HCT116 (cell line): ENCODE measurements at regions of chr20 and their contacts with region 1.

Region 1: GRCh38 chr20:49541733-49542513 is 26.0 kb downstream of the PTGIS start:
- DNase-seq: peak; percentile 67
- ATAC-seq: peak; percentile 77
- H3K4me3 ChIP-seq: no peak overlapping the region
- H3K27ac ChIP-seq: no peak overlapping the region
- H3K4me1 ChIP-seq: no peaks in the 10 kb centered on the region
- H3K27me3 ChIP-seq: no peaks in the 10 kb centered on the region
- CTCF ChIP-seq: peak; percentile 72 to 98 (median 86)
- POLR2A ChIP-seq: no peak
- RAD21 ChIP-seq: peak; percentile 93

Region 2: GRCh38 chr20:49460916-49461315 is 81.0 kb before region 1 on chr20:
- CTCF ChIA-PET with region 1: no interaction called
- POLR2A ChIA-PET with region 1: no interaction called
- RAD21 ChIA-PET with region 1: no interaction called
- intact Hi-C with region 1: no loop called
- DNase-seq: no peak
- ATAC-seq: no peak
- H3K4me3 ChIP-seq: no peak overlapping the region
- H3K27ac ChIP-seq: no peak overlapping the region
- H3K4me1 ChIP-seq: no peaks in the 10 kb centered on the region
- H3K27me3 ChIP-seq: 0 out of 2 replicates have a peak, but pooled peaks cover 5% of the 10 kb centered on the region
- CTCF ChIP-seq: no peak
- POLR2A ChIP-seq: no peak
- RAD21 ChIP-seq: no peak

Region 3: GRCh38 chr20:49556621-49557020 is 14.7 kb after region 1 on chr20:
- CTCF ChIA-PET with region 1: interaction called, 21 read pairs
- POLR2A ChIA-PET with region 1: no interaction called
- RAD21 ChIA-PET with region 1: no interaction called
- intact Hi-C with region 1: no loop called
- DNase-seq: no peak
- ATAC-seq: no peak
- H3K4me3 ChIP-seq: no peak overlapping the region
- H3K27ac ChIP-seq: no peak overlapping the region
- H3K4me1 ChIP-seq: peaks cover 4 to 7% of the 10 kb centered on the region in 2 experiments
- H3K27me3 ChIP-seq: no peaks in the 10 kb centered on the region
- CTCF ChIP-seq: no peak
- POLR2A ChIP-seq: no peak
- RAD21 ChIP-seq: no peak

Region 4: DNA sequence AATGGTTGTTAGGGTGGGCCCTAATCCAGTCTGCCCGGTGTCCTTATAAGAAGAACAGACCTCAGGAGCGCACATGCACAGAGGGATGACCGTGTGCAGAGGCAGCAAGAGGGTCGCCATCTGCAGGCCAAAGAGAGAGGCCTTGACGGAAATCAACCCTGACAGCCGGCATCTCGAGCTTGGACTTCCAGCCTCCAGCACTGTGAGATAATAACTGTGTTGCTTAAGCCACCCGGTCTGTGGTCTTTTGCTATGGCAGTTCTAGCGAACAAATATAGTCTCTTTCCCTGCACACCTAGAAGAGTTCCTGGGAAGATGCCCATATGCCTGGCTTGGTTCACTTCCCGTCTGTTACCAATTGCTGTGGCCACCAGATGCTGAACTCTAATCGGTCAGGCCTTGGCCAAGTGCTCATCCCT is 61.3 kb after region 1 on chr20:
- CTCF ChIA-PET with region 1: interaction called, 66 read pairs
- POLR2A ChIA-PET with region 1: interaction called, 3 read pairs
- RAD21 ChIA-PET with region 1: interaction called, 10 read pairs
- intact Hi-C with region 1: no loop called
- DNase-seq: no peak
- ATAC-seq: peak; percentile 86
- H3K4me3 ChIP-seq: no peak overlapping the region
- H3K27ac ChIP-seq: no peak overlapping the region
- H3K4me1 ChIP-seq: peaks cover 6 to 9% of the 10 kb centered on the region in 2 experiments; a peak in 3 of 4 replicates
- H3K27me3 ChIP-seq: no peaks in the 10 kb centered on the region
- CTCF ChIP-seq: peak; percentile 57 to 64 (median 57); a peak in 5 of 6 replicates
- POLR2A ChIP-seq: no peak
- RAD21 ChIP-seq: peak; percentile 53

Region 5: DNA sequence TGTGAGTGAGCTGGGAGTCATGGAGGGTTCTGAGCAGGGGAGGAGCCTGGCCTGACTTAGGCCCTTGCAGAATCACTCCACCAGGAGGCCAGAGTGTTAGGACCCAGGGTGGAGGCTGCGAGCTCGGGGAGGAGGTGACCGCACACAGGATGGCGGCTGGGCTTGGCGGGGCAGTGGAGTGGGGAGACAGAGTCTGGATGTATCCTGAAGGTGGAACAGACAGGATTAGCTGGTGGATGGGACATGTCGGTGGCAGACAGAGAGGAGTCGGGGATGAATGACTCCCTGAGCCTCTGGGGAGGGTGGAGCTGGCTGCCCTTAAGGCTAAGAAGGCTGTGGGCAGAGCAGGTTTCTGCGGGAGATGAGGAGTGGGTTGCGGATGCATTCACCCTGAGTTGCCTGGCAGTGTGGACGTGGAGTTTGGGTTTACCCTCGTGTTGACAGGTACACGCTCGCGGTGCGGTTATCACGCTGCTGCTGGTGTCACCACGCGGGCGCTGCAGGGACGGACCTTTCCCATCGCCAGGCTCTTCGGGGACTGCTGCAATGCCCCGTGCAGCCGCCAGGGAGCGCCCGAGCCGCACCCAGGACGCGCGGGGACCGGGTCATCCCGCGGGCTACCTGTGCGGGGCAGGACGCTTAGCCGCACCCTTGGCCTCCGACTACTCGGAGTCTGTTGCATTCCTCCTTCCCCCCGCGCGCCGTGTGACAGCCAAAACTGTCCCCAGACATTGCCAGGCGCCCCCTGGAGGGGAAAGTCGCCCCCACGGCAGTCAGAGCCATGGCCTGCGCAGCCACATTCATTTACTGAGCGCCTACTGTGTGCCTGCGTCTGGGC is 69.0 kb after region 1 on chr20:
- CTCF ChIA-PET with region 1: interaction called, 66 read pairs
- POLR2A ChIA-PET with region 1: interaction called, 3 read pairs
- RAD21 ChIA-PET with region 1: interaction called, 7 to 10 read pairs
- intact Hi-C with region 1: loop called (anchors 1 kb)
- DNase-seq: peak; percentile 72
- ATAC-seq: peak; percentile 85
- H3K4me3 ChIP-seq: peak overlapping the region; percentile 22 to 27; a peak in 3 of 4 replicates
- H3K27ac ChIP-seq: no peak overlapping the region; the same call in 1 of the 2 replicates
- H3K4me1 ChIP-seq: peaks cover 6 to 26% of the 10 kb centered on the region in 2 experiments; a peak in 3 of 4 replicates
- H3K27me3 ChIP-seq: no peaks in the 10 kb centered on the region
- CTCF ChIP-seq: peak; percentile 92 to 99 (median 98)
- POLR2A ChIP-seq: no peak
- RAD21 ChIP-seq: peak; percentile 100

Region 6: GRCh38 chr20:49724408-49725223 is 182.7 kb after region 1 on chr20:
- CTCF ChIA-PET with region 1: no interaction called
- POLR2A ChIA-PET with region 1: no interaction called
- RAD21 ChIA-PET with region 1: no interaction called
- intact Hi-C with region 1: no loop called
- DNase-seq: no peak
- ATAC-seq: no peak
- H3K4me3 ChIP-seq: no peak overlapping the region
- H3K27ac ChIP-seq: no peak overlapping the region
- H3K4me1 ChIP-seq: no peaks in the 10 kb centered on the region
- H3K27me3 ChIP-seq: no peaks in the 10 kb centered on the region
- CTCF ChIP-seq: no peak
- POLR2A ChIP-seq: no peak
- RAD21 ChIP-seq: no peak

Region 7: GRCh38 chr20:49846206-49846807 is 304.4 kb after region 1 on chr20:
- CTCF ChIA-PET with region 1: interaction called, 11 read pairs
- POLR2A ChIA-PET with region 1: no interaction called
- RAD21 ChIA-PET with region 1: interaction called in 1 of 2 experiments, 4 read pairs
- intact Hi-C with region 1: no loop called
- DNase-seq: peak; percentile 16
- ATAC-seq: peak; percentile 90
- H3K4me3 ChIP-seq: no peak overlapping the region
- H3K27ac ChIP-seq: no peak overlapping the region
- H3K4me1 ChIP-seq: no peaks in the 10 kb centered on the region
- H3K27me3 ChIP-seq: no peaks in the 10 kb centered on the region
- CTCF ChIP-seq: peak; percentile 51 to 82 (median 65)
- POLR2A ChIP-seq: no peak
- RAD21 ChIP-seq: peak; percentile 82

Region 8: DNA sequence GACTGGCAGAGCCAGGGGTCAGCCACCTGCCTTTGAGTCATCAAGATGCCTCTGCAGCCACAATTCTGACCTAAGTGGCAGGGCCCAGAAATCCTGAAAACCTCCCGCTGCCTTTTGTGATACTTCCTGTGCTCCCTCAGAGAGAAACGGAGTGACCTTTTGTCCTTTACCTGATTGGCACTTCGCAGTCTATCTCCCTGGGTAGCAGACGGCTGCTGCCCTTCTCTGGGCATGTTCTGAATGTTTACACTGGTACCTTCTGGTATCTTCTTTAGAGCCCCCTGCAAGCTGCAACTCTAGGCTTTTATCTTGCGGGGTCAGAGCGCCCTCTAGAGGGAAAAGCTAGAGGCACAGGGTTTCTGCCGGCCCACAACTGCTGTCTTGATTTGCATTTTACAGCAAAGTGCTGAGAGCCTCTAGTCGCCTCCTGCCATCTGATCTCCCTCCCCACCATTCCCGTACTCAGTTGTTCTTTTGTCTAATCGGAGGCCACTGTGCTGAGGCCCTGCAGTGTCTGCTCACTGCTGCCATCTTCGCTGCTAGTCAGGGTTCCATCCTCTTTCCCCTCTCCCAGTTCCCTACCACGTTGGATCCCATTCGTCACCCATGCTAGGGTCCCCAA is 346.5 kb after region 1 on chr20:
- CTCF ChIA-PET with region 1: interaction called, 5 read pairs
- POLR2A ChIA-PET with region 1: no interaction called
- RAD21 ChIA-PET with region 1: no interaction called
- intact Hi-C with region 1: loop called (anchors 5 kb)
- DNase-seq: peak; percentile 21
- ATAC-seq: peak; percentile 84
- H3K4me3 ChIP-seq: no peak overlapping the region
- H3K27ac ChIP-seq: no peak overlapping the region
- H3K4me1 ChIP-seq: peaks cover 0 to 5% of the 10 kb centered on the region in 2 experiments; a peak in 1 of 4 replicates
- H3K27me3 ChIP-seq: no peaks in the 10 kb centered on the region
- CTCF ChIP-seq: peak; percentile 83 to 96 (median 86)
- POLR2A ChIP-seq: no peak
- RAD21 ChIP-seq: peak; percentile 82

Region 9: DNA sequence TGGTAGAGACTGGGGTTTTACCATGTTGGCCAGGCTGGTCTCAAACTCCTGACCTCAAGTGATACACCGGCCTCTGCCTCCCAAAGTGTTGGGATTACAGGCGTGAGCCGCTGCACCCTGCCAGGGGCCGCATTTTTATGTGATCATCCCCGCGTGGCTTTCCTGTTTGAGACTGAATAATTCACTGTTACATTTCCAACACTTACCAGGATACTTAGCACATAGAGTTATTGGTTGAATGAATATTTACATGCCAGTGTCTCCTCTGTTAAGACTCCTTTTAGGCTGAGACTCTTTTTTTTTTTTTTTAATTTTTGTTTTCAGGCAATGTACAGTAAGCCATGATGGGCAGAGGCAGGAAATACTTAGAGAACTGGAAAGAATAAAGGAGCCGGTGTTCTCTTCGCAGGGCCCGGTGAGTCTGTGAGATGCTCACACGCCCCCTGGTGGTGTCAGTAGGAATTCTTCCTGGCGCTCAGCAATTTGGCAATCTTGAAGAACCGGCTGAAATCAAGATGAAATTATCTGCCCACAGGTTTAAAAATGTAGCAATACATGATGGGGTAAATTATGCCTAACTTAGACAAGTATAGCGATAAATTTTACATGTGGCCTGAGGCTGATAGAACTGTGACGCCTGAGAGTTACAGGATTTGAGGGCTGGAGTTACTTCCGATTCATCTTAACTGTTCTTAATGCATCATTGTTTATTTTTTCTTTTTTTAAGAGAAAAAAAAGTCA is 386.6 kb after region 1 on chr20:
- CTCF ChIA-PET with region 1: no interaction called
- POLR2A ChIA-PET with region 1: no interaction called
- RAD21 ChIA-PET with region 1: no interaction called
- intact Hi-C with region 1: loop called (anchors 1 kb)
- DNase-seq: peak; percentile 78
- ATAC-seq: peak; percentile 95
- H3K4me3 ChIP-seq: no peak overlapping the region
- H3K27ac ChIP-seq: no peak overlapping the region
- H3K4me1 ChIP-seq: peaks cover 7 to 10% of the 10 kb centered on the region in 2 experiments; a peak in 3 of 4 replicates
- H3K27me3 ChIP-seq: no peaks in the 10 kb centered on the region
- CTCF ChIP-seq: peak; percentile 85 to 93 (median 90)
- POLR2A ChIP-seq: no peak
- RAD21 ChIP-seq: peak; percentile 78